ENCODE measurements at regions of chr3 and their contacts with region 1.

Region 1: DNA sequence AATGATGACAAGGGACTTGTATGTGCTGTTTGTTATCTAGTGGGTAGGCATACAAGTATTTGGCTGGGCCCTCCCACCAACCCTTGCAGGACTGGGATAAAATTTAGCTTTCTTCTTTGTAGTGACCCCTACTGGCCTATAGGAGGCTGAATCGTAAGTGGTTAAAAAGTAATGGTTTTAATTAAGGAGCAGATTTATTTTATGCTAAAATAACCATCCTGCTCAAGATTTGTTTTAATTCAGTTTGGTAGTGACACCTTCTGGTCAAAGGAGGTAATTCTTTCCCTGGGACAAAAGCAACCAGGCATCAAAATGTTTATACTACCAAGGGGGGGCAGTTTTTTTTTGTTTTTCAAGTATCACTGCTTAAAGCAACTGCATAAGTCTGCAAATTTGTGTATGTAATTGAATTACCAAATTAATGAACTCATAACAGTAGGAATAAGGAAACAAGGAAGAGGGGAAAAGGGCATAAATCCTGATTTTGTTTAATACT is 70.7 kb downstream of the TOP2B start:
- DNase-seq: peak; percentile 90
- H3K4me3 ChIP-seq: no peak overlapping the region
- H3K27ac ChIP-seq: no peak overlapping the region
- H3K4me1 ChIP-seq: peaks cover 6% of the 10 kb centered on the region
- H3K27me3 ChIP-seq: no peaks in the 10 kb centered on the region
- CTCF ChIP-seq: peak; percentile 48 to 75
- POLR2A ChIP-seq: no peak

Region 2: GRCh38 chr3:24834442-24834841 is 759.6 kb before region 1 on chr3:
- CTCF ChIA-PET with region 1: no interaction called
- POLR2A ChIA-PET with region 1: no interaction called
- dilution Hi-C with region 1: no loop called
- intact Hi-C with region 1: loop called (anchors 2 kb)
- DNase-seq: no peak
- H3K4me3 ChIP-seq: no peak overlapping the region
- H3K27ac ChIP-seq: no peak overlapping the region
- H3K4me1 ChIP-seq: peaks cover 4% of the 10 kb centered on the region
- H3K27me3 ChIP-seq: peaks cover 6 to 27% of the 10 kb centered on the region in 2 experiments
- CTCF ChIP-seq: no peak
- POLR2A ChIP-seq: no peak

Region 3: DNA sequence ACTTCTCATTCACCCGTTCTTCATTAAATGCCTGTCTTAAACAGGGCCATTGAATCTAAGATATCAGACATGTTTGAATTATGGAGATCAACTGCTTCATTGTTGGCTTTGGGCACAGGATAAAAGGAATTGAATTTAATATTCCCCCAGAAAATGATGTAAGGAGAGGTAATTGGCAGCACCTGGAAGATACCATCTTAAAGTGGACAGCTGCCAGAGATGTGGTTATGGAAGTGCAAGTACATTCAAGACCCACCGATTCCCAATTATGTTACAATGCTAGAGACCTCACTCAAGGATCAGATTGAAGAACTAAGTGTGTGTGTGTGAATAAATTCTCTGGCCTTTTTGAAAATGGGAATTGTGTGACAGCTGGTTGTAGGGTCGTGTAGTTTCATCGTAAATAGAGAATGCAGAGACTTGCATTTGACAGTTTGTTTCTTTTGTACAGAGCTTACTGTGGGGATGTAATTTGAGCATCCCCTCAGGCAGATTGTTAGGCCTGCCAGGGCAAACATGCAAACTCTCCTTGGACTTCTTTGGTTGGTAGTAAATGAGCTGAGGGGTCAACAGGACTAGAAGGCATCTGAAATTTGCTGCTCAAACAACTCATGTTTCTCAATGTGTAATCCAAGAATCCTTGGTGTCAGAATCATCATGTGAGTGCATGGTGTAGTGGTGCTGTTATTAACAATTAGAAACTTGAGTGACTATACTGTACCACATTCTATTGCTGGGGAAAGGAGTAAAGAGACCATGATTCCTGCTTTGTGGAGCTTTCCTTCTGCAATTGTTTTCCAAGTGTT is 740.2 kb before region 1 on chr3:
- CTCF ChIA-PET with region 1: no interaction called
- POLR2A ChIA-PET with region 1: no interaction called
- dilution Hi-C with region 1: no loop called
- intact Hi-C with region 1: no loop called
- DNase-seq: no peak
- H3K4me3 ChIP-seq: no peak overlapping the region
- H3K27ac ChIP-seq: no peak overlapping the region
- H3K4me1 ChIP-seq: peaks cover 3% of the 10 kb centered on the region
- H3K27me3 ChIP-seq: no peaks in the 10 kb centered on the region
- CTCF ChIP-seq: no peak
- POLR2A ChIP-seq: no peak

Region 4: GRCh38 chr3:25033407-25034029 is 560.5 kb before region 1 on chr3:
- CTCF ChIA-PET with region 1: interaction called, 30 read pairs
- POLR2A ChIA-PET with region 1: no interaction called
- dilution Hi-C with region 1: no loop called
- intact Hi-C with region 1: no loop called
- DNase-seq: peak; percentile 15
- H3K4me3 ChIP-seq: no peak overlapping the region
- H3K27ac ChIP-seq: no peak overlapping the region
- H3K4me1 ChIP-seq: no peaks in the 10 kb centered on the region
- H3K27me3 ChIP-seq: no peaks in the 10 kb centered on the region
- CTCF ChIP-seq: peak; percentile 60 to 61
- POLR2A ChIP-seq: no peak

Region 5: GRCh38 chr3:25297667-25298585 is 296.1 kb before region 1 on chr3:
- CTCF ChIA-PET with region 1: interaction called, 4 read pairs
- POLR2A ChIA-PET with region 1: no interaction called
- dilution Hi-C with region 1: no loop called
- intact Hi-C with region 1: loop called (anchors 2 kb)
- DNase-seq: peak; percentile 37
- H3K4me3 ChIP-seq: no peak overlapping the region
- H3K27ac ChIP-seq: no peak overlapping the region
- H3K4me1 ChIP-seq: no peaks in the 10 kb centered on the region
- H3K27me3 ChIP-seq: no peaks in the 10 kb centered on the region
- CTCF ChIP-seq: no peak
- POLR2A ChIP-seq: no peak

Region 6: GRCh38 chr3:25433868-25434267 is 160.2 kb before region 1 on chr3:
- CTCF ChIA-PET with region 1: interaction called, 24 read pairs
- POLR2A ChIA-PET with region 1: interaction called, 12 read pairs
- dilution Hi-C with region 1: no loop called
- intact Hi-C with region 1: no loop called
- DNase-seq: peak; percentile 95
- H3K4me3 ChIP-seq: peak overlapping the region in 1 of 3 experiments; percentile 14
- H3K27ac ChIP-seq: peak overlapping the region; percentile 96
- H3K4me1 ChIP-seq: peaks cover 41% of the 10 kb centered on the region
- H3K27me3 ChIP-seq: no peaks in the 10 kb centered on the region
- CTCF ChIP-seq: no peak
- POLR2A ChIP-seq: no peak

Region 7: GRCh38 chr3:25483456-25483855 is 110.6 kb before region 1 on chr3:
- CTCF ChIA-PET with region 1: interaction called, 17 read pairs
- POLR2A ChIA-PET with region 1: no interaction called
- dilution Hi-C with region 1: no loop called
- intact Hi-C with region 1: no loop called
- DNase-seq: peak; percentile 90
- H3K4me3 ChIP-seq: no peak overlapping the region
- H3K27ac ChIP-seq: peak overlapping the region; percentile 55
- H3K4me1 ChIP-seq: peaks cover 48% of the 10 kb centered on the region
- H3K27me3 ChIP-seq: no peaks in the 10 kb centered on the region
- CTCF ChIP-seq: no peak
- POLR2A ChIP-seq: no peak

Region 8: GRCh38 chr3:25578059-25578458 is 16.0 kb before region 1 on chr3:
- CTCF ChIA-PET with region 1: interaction called, 12 read pairs
- POLR2A ChIA-PET with region 1: no interaction called
- dilution Hi-C with region 1: no loop called
- intact Hi-C with region 1: no loop called
- DNase-seq: no peak
- H3K4me3 ChIP-seq: no peak overlapping the region
- H3K27ac ChIP-seq: no peak overlapping the region
- H3K4me1 ChIP-seq: peaks cover 10% of the 10 kb centered on the region
- H3K27me3 ChIP-seq: no peaks in the 10 kb centered on the region
- CTCF ChIP-seq: no peak
- POLR2A ChIP-seq: no peak

Measured in endothelial cell of umbilical vein (primary cell).